BJ (cell line): ENCODE measurements at regions of chr12 and their contacts with region 1.

Region 1: GRCh38 chr12:96218989-96219678 is 25.0 kb downstream of the ELK3 start:
- DNase-seq: no peak
- H3K4me3 ChIP-seq: no peak overlapping the region
- H3K27me3 ChIP-seq: no peaks in the 10 kb centered on the region
- CTCF ChIP-seq: no peak

Region 2: DNA sequence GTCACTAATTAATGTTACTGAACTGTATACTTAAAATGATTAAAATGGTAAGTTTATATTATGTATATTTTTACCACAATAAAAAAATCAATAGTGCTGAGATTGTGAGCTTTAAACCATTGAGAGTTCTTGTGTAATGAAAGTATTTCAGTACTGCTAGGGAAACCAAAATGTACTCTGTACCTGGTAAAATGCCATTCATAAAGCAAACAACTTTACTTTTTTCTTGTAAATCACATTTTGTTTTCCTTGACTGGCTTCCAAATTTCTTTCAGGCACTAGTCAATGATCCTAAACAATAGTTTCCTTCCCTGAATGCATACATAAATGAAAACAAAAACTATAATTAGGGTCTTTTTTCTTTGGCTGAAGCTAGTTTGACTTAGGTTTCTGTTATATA is 389.7 kb before region 1 on chr12:
- CTCF ChIA-PET with region 1: no interaction called
- POLR2A ChIA-PET with region 1: no interaction called
- DNase-seq: no peak
- H3K4me3 ChIP-seq: no peak overlapping the region
- H3K27me3 ChIP-seq: peaks cover 10% of the 10 kb centered on the region
- CTCF ChIP-seq: no peak

Region 3: DNA sequence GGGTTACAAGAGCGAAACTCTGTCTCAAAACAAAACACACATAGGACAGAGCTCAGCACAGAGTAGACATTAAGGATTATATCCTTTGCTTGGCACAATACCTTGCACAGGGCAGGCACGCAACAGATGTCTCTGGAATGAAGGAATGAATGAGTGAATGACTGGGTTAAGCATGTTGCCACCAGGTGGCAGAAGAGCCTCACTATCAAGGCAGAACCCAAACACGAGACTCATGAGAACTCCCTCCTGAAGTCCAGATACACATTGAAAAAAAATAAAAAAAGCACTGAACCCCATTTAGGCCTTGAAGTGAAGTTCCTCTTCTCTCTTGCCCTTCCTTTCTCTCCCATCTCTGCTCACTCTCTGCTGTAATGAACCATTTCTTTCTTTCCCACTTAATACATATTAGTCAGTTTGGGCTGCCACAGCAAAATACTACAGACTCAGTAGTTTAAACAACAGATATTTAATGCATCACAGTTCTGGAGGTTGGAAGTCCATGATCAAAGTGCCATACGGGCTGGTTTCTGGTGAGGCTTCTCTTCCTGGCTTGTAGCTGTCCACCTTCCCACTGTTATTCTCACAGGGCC is 157.2 kb before region 1 on chr12:
- CTCF ChIA-PET with region 1: interaction called, 55 read pairs
- POLR2A ChIA-PET with region 1: no interaction called
- DNase-seq: peak; percentile 28
- H3K4me3 ChIP-seq: no peak overlapping the region
- H3K27me3 ChIP-seq: no peaks in the 10 kb centered on the region
- CTCF ChIP-seq: peak; percentile 79

Region 4: GRCh38 chr12:96070670-96071279 is 148.4 kb before region 1 on chr12:
- CTCF ChIA-PET with region 1: interaction called, 48 read pairs
- POLR2A ChIA-PET with region 1: no interaction called
- DNase-seq: no peak
- H3K4me3 ChIP-seq: no peak overlapping the region
- H3K27me3 ChIP-seq: no peaks in the 10 kb centered on the region
- CTCF ChIP-seq: no peak

Region 5: DNA sequence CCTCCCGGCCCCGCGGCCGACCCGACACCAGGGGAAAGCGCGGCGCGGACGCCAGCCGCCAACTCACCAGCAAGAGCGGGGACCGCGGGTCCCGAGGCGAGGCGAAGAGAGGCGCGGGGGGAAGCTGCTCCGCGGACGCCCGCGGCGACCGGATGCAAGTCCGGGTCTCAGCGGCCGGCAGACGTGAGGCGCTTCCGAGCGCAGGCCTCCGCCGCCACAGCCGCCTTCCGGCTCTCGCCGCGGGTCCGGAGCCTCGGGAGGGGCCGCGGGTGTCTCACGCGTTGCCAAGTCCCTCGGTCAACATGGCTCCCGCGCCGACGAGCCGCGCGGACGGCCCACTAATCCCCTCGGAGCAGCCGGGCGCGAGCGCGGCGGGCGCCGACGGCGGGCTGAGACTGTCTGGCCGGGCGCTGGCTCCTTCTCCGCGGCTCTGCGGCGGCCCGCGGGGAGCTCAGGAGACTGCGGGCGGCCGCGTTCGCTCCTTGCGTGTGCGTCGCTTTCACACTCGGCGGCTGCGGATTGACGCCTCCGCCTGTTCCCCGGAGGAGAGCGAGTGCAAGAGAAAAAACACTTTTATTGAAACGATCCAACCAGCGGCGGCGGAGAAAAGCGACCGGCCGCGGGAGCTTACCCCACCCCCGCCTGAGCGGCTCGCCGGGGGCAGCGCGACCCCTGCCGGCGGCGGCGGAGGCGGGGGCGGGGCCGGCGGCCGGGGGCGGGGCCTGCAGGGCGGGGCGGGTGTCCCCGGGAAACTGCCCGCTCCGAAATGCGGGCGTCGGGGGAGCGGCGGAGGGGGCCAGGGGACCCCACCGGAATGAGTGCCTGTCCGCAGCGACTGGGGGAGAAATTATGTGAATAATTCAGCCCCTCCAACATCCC is 181.0 kb after region 1 on chr12 and contains the start of gene CDK17:
- CTCF ChIA-PET with region 1: interaction called, 12 read pairs
- POLR2A ChIA-PET with region 1: no interaction called
- DNase-seq: no peak
- H3K4me3 ChIP-seq: peak within 1 kb of the TSS; percentile 80
- H3K27me3 ChIP-seq: no peaks in the 10 kb centered on the region
- CTCF ChIP-seq: peak; percentile 34; the same call in 1 of the 2 replicates
- polyA plus RNA-seq, gene CDK17: 14.8 and 32.8 TPM in 2 replicates